Activated naive CD4-positive, alpha-beta T cell treated with anti-CD3 and anti-CD28 coated beads, Interleukin-2, amount 10 ng/mL, durations not matched to agents 7 days and 5 days (primary cell): ENCODE measurements at regions of chr14 and their contacts with region 1.

Region 1: DNA sequence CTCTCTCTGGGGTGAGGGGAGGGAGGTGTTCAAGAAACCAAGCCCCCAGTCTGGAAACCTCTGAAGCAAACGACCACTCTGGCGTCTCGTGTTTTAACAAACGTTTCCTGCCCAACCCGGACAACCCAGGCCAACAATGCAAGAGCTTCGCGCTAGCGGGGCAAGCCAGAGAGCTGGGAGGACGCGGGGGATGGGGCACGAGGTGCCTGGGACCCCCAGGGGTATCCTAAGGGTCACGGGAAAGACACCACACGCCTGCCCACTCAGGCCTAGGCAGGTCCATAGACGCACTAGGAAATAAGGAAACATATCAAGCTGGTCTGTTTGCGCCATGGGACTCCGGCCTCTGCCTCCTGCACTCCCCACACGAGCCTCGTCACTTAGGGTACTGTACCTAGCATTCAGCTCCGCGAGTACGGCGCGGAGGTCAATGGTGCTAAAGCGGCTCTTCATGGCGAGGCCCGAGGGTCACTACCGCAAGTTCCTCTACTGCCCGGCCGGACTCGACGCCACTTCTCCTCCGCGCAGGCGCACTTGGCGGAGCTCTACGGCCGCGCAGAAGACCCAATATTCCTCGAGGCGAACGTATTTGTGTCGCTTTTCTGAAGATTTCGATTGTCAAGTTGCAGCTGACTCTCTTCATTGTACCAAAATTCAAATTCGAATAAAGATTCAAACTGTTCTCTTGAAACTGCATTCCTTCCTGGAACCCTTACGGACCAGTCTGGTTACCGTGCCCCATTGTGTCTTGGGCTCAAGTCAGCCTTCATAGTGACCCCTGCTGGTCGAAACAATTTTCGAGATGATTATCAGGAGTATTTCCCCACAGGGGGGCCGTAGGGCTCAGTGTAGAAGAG is at the start of gene NEMF:
- DNase-seq: peak; percentile 83
- H3K4me3 Mint-ChIP-seq: peak within 1 kb of the TSS; percentile 98
- H3K27ac Mint-ChIP-seq: peak within 1 kb of the TSS; percentile 96
- H3K4me1 Mint-ChIP-seq: peaks cover 51% of the 10 kb centered on the region
- H3K27me3 Mint-ChIP-seq: no peaks in the 10 kb centered on the region

Region 2: DNA sequence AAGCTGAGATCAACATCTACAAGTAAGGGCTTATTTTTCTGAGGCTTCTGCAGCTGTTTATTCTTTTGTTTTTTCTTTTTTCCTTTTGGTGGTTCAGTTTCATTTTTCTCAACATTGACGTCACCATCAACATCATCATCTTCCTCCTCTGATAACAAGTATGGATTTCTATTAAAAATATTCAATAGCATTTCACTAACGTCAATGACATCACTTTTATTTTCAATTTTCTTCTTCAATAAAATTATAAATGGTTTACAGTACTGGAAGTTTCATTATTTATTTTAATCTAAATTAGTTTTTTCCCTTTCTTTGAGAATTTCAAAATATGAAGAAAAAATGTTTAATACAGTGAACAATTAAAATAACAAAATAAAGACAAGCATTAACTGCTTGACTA is 23.9 kb before region 1 on chr14:
- CTCF ChIA-PET with region 1: interaction called, 11 read pairs
- DNase-seq: no peak
- H3K4me3 Mint-ChIP-seq: no peak overlapping the region
- H3K27ac Mint-ChIP-seq: no peak overlapping the region
- H3K4me1 Mint-ChIP-seq: no peaks in the 10 kb centered on the region
- H3K27me3 Mint-ChIP-seq: no peaks in the 10 kb centered on the region

Region 3: DNA sequence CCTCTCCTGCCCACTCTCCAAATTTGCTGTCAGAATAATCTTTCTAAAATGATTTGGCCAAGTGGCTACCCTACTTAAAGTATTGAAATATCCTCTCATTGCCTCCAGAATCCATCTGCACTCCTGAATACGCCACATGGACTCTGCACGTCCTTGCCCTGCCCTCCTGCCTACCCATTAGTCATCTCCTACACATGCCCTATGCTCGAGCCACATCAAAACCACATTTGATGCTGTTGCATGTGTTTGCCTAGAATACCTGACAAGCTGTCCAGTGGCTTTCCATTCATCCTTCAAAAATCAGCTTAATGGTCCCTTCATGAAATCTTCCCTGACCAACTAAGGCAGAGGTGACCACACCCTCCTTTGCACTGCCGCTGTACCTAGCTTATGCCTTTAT is 246.8 kb after region 1 on chr14:
- CTCF ChIA-PET with region 1: interaction called, 27 read pairs
- DNase-seq: no peak
- H3K4me3 Mint-ChIP-seq: no peak overlapping the region
- H3K27ac Mint-ChIP-seq: no peak overlapping the region
- H3K4me1 Mint-ChIP-seq: peaks cover 82% of the 10 kb centered on the region
- H3K27me3 Mint-ChIP-seq: no peaks in the 10 kb centered on the region

Region 4: DNA sequence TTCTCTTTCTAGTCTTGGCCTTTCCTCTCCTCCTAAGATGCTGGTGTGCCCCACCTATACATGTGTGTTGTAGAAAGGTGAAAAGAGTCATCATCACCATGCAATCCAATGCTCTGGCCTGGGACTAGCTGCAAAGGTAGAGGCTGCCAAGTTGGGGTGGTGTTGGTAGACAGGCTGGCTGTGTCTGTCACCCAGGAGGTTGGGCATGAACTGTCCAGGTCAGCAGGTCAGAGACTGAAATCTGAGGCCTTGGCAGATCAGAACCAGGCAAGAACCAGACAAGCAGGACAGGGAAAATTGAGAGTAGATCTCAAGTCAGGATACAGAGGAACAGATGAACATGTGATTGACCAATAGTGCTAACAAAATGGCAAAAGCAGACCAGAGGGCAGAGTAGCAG is 433.3 kb after region 1 on chr14:
- CTCF ChIA-PET with region 1: no interaction called
- DNase-seq: no peak
- H3K4me3 Mint-ChIP-seq: no peak overlapping the region
- H3K27ac Mint-ChIP-seq: no peak overlapping the region
- H3K4me1 Mint-ChIP-seq: no peaks in the 10 kb centered on the region
- H3K27me3 Mint-ChIP-seq: no peaks in the 10 kb centered on the region